Dorsolateral prefrontal cortex (tissue), 120 donors: ENCODE measurements at regions of chr5 and their contacts with region 1.

Region 1: DNA sequence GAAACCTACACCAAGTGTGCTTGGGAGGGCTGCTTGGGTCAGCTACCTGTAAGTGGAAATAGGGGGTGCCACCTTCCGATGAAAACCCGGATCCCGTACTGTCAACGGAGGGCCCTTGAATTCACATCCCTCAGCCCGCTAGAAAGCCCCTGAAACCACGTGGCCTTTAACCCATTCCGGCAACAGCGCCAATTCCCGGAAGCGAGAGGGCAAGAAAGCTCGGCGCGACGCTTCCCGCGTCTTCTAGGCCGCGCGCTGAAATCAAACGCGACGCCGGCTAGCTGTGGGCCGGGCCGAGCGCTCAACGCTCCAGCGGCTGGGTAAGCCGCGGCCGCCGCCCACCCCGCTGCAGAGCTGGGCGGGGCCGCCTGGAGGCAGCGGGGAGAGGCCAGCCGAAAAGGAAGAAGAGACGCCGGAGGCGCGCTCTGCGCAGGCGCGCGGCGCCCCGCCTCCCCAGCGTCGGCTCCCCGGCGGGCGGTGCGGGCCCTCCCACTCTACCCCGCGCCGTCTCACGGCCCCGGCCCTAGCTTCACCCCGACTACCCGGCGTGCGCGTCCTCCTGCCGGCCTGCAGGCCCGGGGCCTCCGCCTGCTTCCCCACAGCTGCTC is at the start of gene KIF2A:
- DNase-seq: peak; percentile 73 to 95 (median 85)
- H3K4me3 ChIP-seq: peak within 1 kb of the TSS; percentile 52 to 98 (median 90)
- H3K27ac ChIP-seq: peak within 1 kb of the TSS; percentile 59 to 98 (median 95)
- H3K27me3 ChIP-seq: no peaks in the 10 kb centered on the region
- CTCF ChIP-seq: peak in 46 of 56 donors; percentile 11 to 63 (median 43)
- total RNA-seq, gene KIF2A: 68.8 to 125 (median 95.8) TPM

Region 2: DNA sequence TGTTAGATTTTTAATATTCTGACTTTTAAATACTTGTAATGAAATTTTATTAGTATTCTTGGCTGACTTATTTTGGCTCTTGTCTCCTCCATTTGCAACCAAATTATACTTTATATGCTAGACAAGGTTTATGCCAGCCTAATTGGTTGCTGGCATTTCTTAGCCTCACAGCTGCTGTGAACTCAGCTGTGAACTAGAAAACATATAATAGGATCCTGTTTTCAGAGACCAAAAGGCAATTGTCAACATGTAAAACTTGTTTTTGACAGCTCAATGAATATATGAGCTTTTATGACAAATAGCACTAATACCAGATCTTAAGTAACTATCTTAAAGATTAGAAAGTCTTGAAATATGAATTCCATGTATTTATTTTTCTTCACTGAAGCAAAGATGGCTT is 26.1 kb after region 1 on chr5:
- intact Hi-C with region 1: loop called (anchors 2 kb)
- DNase-seq: no peak
- H3K4me3 ChIP-seq: peak overlapping the region in 40 of 59 donors; percentile 0 to 52 (median 26)
- H3K27ac ChIP-seq: peak overlapping the region; percentile 22 to 98 (median 89)
- H3K27me3 ChIP-seq: no peaks in the 10 kb centered on the region
- CTCF ChIP-seq: peak in 3 of 56 donors; percentile 11 to 12 (median 11)

Region 3: GRCh38 chr5:62403434-62404250 is 97.8 kb after region 1 on chr5 and contains the start of gene DIMT1:
- intact Hi-C with region 1: loop called in 1 of 2 experiments (anchors 5 kb)
- DNase-seq: peak; percentile 95 to 98 (median 98)
- H3K4me3 ChIP-seq: peak within 1 kb of the TSS; percentile 55 to 100 (median 92)
- H3K27ac ChIP-seq: peak within 1 kb of the TSS; percentile 44 to 96 (median 88)
- H3K27me3 ChIP-seq: no peaks in the 10 kb centered on the region
- CTCF ChIP-seq: peak in 32 of 56 donors; percentile 2 to 63 (median 29)
- total RNA-seq, gene DIMT1: 6.4 to 20.5 (median 13.4) TPM

Region 4: DNA sequence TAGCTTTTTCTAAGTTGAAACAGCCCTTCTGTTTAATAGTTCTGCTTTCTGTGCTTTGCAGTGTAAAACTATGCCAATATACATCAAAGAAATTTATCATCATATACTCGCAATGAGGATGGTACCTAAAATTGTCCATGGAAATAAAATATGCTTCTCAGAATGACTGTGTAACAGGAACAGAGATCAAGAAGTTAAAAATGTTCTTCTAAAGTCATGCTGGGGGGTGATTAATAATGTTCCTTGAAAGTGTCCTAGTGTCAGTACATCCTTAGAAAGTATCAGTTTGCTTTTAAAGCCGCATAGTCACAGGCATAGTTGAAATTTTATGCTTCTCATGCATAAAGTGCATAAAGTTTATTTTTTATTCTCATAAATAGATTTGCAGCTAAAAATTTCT is 268.8 kb after region 1 on chr5:
- intact Hi-C with region 1: no loop called
- DNase-seq: no peak
- H3K4me3 ChIP-seq: no peak overlapping the region
- H3K27ac ChIP-seq: no peak overlapping the region
- H3K27me3 ChIP-seq: no peaks in the 10 kb centered on the region
- CTCF ChIP-seq: no peak